Endothelial cell of umbilical vein (primary cell): ENCODE measurements at regions of chr2 and their contacts with region 1.

Region 1: GRCh38 chr2:9142551-9143263 is 63.9 kb upstream of the ASAP2 start:
- DNase-seq: peak; percentile 78
- H3K4me3 ChIP-seq: peak overlapping the region in 1 of 3 experiments; percentile 6
- H3K27ac ChIP-seq: no peak overlapping the region
- H3K4me1 ChIP-seq: peaks cover 5% of the 10 kb centered on the region
- H3K27me3 ChIP-seq: no peaks in the 10 kb centered on the region
- CTCF ChIP-seq: peak; percentile 95 to 96
- POLR2A ChIP-seq: no peak

Region 2: GRCh38 chr2:8872821-8873432 is 269.8 kb before region 1 on chr2:
- CTCF ChIA-PET with region 1: interaction called, 126 read pairs
- POLR2A ChIA-PET with region 1: no interaction called
- dilution Hi-C with region 1: no loop called
- intact Hi-C with region 1: loop called (anchors 1 kb)
- DNase-seq: peak; percentile 70
- H3K4me3 ChIP-seq: no peak overlapping the region
- H3K27ac ChIP-seq: no peak overlapping the region
- H3K4me1 ChIP-seq: no peaks in the 10 kb centered on the region
- H3K27me3 ChIP-seq: no peaks in the 10 kb centered on the region
- CTCF ChIP-seq: peak; percentile 30 to 43
- POLR2A ChIP-seq: no peak

Region 3: DNA sequence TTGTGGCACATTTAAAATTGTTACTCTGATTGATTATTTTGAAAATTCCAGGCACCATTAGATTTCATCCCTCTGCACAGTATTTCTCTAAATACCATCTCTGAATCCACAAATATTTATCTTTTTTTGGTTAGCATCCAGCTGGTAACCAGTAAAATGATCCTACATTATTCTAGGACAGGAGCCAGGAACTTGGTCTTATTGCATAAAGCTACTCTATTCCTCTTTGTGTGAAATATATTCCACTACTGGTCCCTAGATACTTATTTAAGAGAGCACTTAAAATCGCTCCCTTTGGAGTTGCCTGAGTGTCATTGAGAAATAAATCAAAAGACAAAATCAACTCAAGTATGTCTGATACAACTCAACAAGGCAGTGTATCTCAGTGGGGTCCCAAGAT is 131.8 kb before region 1 on chr2:
- CTCF ChIA-PET with region 1: no interaction called
- POLR2A ChIA-PET with region 1: no interaction called
- dilution Hi-C with region 1: no loop called
- intact Hi-C with region 1: no loop called
- DNase-seq: no peak
- H3K4me3 ChIP-seq: no peak overlapping the region
- H3K27ac ChIP-seq: no peak overlapping the region
- H3K4me1 ChIP-seq: no peaks in the 10 kb centered on the region
- H3K27me3 ChIP-seq: peaks cover 2 to 3% of the 10 kb centered on the region in 2 experiments
- CTCF ChIP-seq: no peak
- POLR2A ChIP-seq: no peak

Region 4: DNA sequence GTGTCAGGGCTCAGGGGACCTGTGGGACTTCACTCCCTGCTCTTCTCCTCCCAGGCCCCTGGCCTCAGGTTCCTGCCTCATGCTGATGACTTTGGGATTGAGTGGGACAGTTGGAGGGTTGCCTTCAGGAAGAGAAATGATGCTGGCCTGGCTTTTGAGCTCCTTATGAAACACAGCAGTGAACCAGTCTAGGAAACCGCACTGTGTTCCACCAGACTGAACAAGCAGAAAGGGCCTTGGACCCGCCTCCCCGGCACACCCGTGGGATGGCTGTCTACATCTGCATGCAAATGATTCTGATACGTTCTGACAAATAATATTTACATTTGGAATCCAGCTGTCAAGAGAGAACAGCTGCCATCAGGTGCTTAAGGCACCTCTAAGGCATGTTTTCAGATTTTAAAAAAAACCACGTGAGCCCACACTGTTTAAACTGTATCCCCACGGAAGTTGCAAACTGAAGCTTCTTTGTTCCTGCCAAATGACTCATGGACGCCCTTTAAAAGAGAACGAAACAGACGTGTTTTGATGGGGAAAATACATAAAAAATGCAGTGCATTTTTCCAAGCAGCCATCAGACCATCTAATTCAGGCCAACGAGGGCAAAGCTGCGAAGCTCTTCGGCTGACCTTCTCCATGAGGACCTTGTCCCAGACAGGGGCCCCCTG is 36.3 kb after region 1 on chr2:
- CTCF ChIA-PET with region 1: interaction called, 9 read pairs
- POLR2A ChIA-PET with region 1: no interaction called
- dilution Hi-C with region 1: no loop called
- intact Hi-C with region 1: loop called (anchors 2 kb)
- DNase-seq: peak; percentile 84
- H3K4me3 ChIP-seq: no peak overlapping the region
- H3K27ac ChIP-seq: peak overlapping the region; percentile 91
- H3K4me1 ChIP-seq: peaks cover 25% of the 10 kb centered on the region
- H3K27me3 ChIP-seq: no peaks in the 10 kb centered on the region
- CTCF ChIP-seq: no peak
- POLR2A ChIP-seq: no peak

Region 5: GRCh38 chr2:9333591-9334171 is 191.0 kb after region 1 on chr2:
- CTCF ChIA-PET with region 1: interaction called, 54 read pairs
- POLR2A ChIA-PET with region 1: interaction called, 6 read pairs
- dilution Hi-C with region 1: no loop called
- intact Hi-C with region 1: loop called (anchors 1 kb)
- DNase-seq: peak; percentile 84
- H3K4me3 ChIP-seq: no peak overlapping the region
- H3K27ac ChIP-seq: peak overlapping the region; percentile 18
- H3K4me1 ChIP-seq: peaks cover 10% of the 10 kb centered on the region
- H3K27me3 ChIP-seq: no peaks in the 10 kb centered on the region
- CTCF ChIP-seq: peak; percentile 63 to 75
- POLR2A ChIP-seq: no peak

Region 6: GRCh38 chr2:9378433-9379390 is 236.0 kb after region 1 on chr2:
- CTCF ChIA-PET with region 1: interaction called, 7 read pairs
- POLR2A ChIA-PET with region 1: no interaction called
- dilution Hi-C with region 1: no loop called
- intact Hi-C with region 1: loop called (anchors 2 kb)
- DNase-seq: peak; percentile 60
- H3K4me3 ChIP-seq: no peak overlapping the region
- H3K27ac ChIP-seq: peak overlapping the region; percentile 73
- H3K4me1 ChIP-seq: peaks cover 12% of the 10 kb centered on the region
- H3K27me3 ChIP-seq: no peaks in the 10 kb centered on the region
- CTCF ChIP-seq: no peak
- POLR2A ChIP-seq: no peak